ENCODE measurements at regions of chr6 and their contacts with region 1.

Region 1: DNA sequence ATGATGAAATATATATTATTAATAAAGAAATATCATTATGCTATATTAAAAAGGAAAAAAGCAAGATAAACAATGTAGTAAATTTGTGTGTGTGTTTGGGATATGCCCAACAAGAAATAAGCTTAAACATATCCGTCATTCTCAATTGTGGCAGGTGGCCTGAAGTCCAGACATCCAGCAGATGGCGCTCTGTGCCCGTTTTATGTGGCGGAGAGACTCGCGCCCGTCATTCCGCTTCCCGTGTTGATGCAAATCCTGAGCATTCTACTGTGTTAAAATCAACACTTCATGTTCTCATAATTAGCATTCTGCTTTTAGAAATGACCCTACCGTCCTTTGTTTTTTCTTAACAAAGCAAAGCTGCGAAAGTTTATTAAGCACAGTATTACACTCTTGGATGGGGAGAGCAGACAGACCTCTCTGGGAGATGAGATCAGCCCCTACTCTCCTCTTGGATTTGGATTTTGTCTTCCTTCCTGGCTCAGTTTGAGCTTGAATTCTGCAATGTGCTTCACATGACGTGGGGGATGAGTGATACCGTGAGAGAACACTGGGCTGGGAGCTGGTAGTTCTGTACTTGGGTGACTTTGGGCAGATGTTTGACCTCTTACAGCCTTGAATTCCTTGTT is 125.8 kb downstream of the MCHR2 start:
- DNase-seq: peak; percentile 87
- ATAC-seq: peak; percentile 84
- H3K4me3 Mint-ChIP-seq: peak overlapping the region; percentile 50
- H3K27ac Mint-ChIP-seq: no peak overlapping the region
- H3K4me1 Mint-ChIP-seq: peaks cover 7% of the 10 kb centered on the region; the same call in 1 of the 2 replicates
- H3K27me3 Mint-ChIP-seq: peaks cover 14% of the 10 kb centered on the region
- CTCF ChIP-seq: peak; percentile 79

Region 2: GRCh38 chr6:99629293-99629692 is 238.9 kb before region 1 on chr6:
- CTCF ChIA-PET with region 1: no interaction called
- POLR2A ChIA-PET with region 1: no interaction called
- DNase-seq: no peak
- ATAC-seq: no peak
- H3K4me3 Mint-ChIP-seq: no peak overlapping the region
- H3K27ac Mint-ChIP-seq: no peak overlapping the region
- H3K4me1 Mint-ChIP-seq: no peaks in the 10 kb centered on the region
- H3K27me3 Mint-ChIP-seq: peaks cover 33% of the 10 kb centered on the region
- CTCF ChIP-seq: no peak

Region 3: DNA sequence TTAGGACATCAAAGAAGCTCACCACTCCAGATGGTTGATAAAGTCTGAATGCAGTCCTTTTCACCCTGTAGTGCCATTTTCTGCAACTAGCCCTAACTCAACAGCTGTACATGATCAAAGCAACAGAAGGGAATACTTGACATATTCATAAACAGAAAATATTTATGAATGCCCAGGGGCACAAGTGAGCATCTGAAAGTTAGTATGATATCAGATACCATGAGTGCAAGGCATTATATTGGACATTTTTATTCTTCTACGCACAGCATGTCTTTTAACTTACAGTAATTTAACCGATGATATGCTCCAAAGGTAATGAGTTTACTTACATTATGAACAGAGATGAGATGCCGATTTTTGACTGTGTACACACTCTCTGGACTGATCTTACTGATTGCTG is 16.2 kb before region 1 on chr6:
- CTCF ChIA-PET with region 1: interaction called, 13 read pairs
- POLR2A ChIA-PET with region 1: no interaction called
- DNase-seq: no peak
- ATAC-seq: no peak
- H3K4me3 Mint-ChIP-seq: no peak overlapping the region
- H3K27ac Mint-ChIP-seq: no peak overlapping the region
- H3K4me1 Mint-ChIP-seq: peaks cover 2% of the 10 kb centered on the region
- H3K27me3 Mint-ChIP-seq: peaks cover 36% of the 10 kb centered on the region
- CTCF ChIP-seq: no peak

Region 4: GRCh38 chr6:99905209-99906106 is 37.3 kb after region 1 on chr6:
- CTCF ChIA-PET with region 1: interaction called, 63 read pairs
- POLR2A ChIA-PET with region 1: no interaction called
- DNase-seq: no peak
- ATAC-seq: peak; percentile 91
- H3K4me3 Mint-ChIP-seq: no peak overlapping the region
- H3K27ac Mint-ChIP-seq: no peak overlapping the region
- H3K4me1 Mint-ChIP-seq: no peaks in the 10 kb centered on the region
- H3K27me3 Mint-ChIP-seq: no peaks in the 10 kb centered on the region
- CTCF ChIP-seq: peak; percentile 58

Region 5: DNA sequence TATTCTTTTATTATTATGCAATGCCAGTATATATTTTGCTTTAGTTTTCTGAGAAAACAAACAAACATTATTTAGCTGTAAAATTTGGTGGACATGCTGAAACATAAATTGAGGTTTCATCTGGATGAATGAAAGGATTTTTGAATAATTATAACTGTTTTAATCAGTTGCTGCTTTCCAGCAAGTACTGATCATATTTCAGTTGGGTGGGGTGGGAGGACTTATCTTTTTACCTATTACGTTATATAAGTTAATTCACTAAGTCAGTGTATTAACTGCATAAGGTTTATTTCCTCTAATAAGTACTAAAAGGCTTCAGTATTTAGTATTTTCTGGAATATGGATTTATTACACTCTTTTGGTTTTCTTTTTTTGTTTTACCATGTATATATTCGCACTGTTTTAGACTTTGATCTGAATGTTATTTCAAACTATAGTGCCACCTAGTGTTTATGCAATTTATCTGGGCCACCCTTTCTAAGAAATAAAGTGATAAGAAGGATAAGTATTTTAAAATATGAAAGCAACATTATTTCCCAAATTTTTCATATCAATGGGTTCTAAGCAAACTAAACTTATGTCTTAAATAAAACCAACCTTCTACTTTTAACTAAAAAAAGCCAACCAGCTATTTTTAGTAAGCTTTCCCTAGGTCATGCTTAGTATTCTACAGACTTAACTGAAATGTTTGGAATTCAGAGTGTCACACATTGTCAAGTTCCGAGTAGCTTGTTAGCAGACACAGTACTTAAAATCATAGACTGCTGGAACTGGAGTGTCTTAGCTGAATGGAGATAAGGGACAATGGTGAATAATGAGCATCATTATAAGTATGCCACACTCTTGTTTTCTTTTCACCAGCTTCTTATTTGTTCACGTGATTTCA is 231.2 kb after region 1 on chr6:
- CTCF ChIA-PET with region 1: interaction called, 52 read pairs
- POLR2A ChIA-PET with region 1: no interaction called
- DNase-seq: no peak
- ATAC-seq: peak; percentile 34; the same call in 1 of the 2 replicates
- H3K4me3 Mint-ChIP-seq: no peak overlapping the region
- H3K27ac Mint-ChIP-seq: no peak overlapping the region
- H3K4me1 Mint-ChIP-seq: peaks cover 4% of the 10 kb centered on the region
- H3K27me3 Mint-ChIP-seq: no peaks in the 10 kb centered on the region
- CTCF ChIP-seq: no peak; the same call in 1 of the 2 replicates

Measured in WTC11 (cell line).